BJ (cell line): ENCODE measurements at regions of chr11 and their contacts with region 1.

Region 1: DNA sequence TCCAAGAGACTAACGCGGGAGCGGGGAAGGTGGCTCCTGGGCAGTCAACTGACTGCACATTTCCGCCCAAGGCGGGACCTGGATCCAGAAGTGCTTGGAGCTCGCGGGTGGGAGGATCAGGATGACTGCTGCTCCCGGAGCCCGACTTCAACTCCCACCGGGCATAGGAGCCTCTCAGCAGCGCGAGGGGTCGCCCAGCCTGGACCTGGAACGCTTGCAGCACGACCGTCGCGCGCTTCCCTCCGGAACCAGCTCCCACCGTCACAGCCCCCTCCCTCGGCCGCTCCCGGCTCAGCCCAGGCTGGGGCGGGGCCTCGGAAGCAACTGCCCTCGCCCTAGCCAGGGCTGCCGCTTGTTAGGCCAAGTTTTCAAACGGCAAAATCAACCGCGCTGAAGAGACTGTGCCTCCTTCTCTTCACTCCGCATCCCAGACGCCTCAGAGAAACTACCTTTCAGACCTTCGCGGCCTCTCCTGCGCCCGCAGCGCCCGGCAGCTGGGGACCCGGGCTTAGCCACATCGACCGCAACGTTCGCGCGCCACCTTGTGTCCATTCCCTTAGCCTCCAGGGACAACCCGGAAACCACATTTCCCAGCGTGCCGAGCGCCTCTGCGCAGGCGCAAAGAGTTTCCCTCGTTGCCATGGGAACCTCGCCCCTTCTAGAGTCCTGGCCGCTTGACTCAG is 14.0 kb downstream of the SSH3 start:
- DNase-seq: peak; percentile 55
- H3K4me3 ChIP-seq: peak overlapping the region; percentile 83
- H3K27me3 ChIP-seq: no peaks in the 10 kb centered on the region
- CTCF ChIP-seq: peak; percentile 93

Region 2: GRCh38 chr11:67082035-67082791 is 235.1 kb before region 1 on chr11:
- CTCF ChIA-PET with region 1: interaction called, 21 read pairs
- POLR2A ChIA-PET with region 1: no interaction called
- DNase-seq: no peak
- H3K4me3 ChIP-seq: no peak overlapping the region
- H3K27me3 ChIP-seq: no peaks in the 10 kb centered on the region
- CTCF ChIP-seq: no peak

Region 3: DNA sequence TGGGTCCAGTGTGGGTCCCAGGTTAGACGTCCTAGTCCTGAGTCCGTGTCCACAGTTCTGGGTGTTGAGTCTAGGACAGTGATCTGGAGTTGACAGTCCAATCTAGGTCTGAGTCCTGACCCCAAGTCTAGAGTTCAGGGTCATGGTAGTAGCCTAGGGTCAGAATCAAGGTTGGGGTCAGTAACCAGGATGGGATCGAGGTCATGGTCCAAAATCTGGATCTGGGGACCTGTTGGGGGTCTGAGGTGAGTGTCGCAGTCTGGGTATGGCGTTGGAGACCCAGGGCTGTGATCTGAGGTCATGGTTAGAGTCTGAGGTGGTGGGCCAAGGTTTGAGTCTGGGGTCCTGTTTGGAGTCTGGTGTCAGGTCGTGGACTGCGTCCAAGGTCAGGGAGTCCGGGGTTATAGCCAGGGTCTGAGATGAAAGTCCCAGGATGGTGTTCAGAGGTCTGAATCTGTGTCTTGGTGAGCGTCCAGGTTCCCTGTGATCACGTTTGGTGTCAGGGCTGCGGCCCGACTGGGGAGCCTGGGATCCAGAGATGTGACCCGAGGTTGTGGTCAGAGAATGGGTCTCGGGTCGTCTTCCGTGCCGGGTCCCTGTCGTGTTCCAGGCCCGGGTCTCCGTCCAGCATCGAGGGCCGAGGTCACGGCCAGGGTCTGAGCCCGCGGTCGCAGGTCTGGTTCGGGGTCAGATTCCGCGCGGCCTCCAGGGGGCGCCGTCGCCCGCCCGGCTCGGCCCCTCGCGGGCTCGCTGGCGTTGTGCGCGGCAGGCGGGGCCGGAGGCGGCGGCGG is 51.5 kb before region 1 on chr11:
- CTCF ChIA-PET with region 1: interaction called, 133 read pairs
- POLR2A ChIA-PET with region 1: no interaction called
- DNase-seq: no peak
- H3K4me3 ChIP-seq: peak overlapping the region; percentile 32
- H3K27me3 ChIP-seq: no peaks in the 10 kb centered on the region
- CTCF ChIP-seq: peak; percentile 65

Region 4: GRCh38 chr11:67277231-67277961 is 40.0 kb before region 1 on chr11:
- CTCF ChIA-PET with region 1: interaction called, 13 read pairs
- POLR2A ChIA-PET with region 1: no interaction called
- DNase-seq: no peak
- H3K4me3 ChIP-seq: peak overlapping the region; percentile 34
- H3K27me3 ChIP-seq: no peaks in the 10 kb centered on the region
- CTCF ChIP-seq: no peak

Region 5: DNA sequence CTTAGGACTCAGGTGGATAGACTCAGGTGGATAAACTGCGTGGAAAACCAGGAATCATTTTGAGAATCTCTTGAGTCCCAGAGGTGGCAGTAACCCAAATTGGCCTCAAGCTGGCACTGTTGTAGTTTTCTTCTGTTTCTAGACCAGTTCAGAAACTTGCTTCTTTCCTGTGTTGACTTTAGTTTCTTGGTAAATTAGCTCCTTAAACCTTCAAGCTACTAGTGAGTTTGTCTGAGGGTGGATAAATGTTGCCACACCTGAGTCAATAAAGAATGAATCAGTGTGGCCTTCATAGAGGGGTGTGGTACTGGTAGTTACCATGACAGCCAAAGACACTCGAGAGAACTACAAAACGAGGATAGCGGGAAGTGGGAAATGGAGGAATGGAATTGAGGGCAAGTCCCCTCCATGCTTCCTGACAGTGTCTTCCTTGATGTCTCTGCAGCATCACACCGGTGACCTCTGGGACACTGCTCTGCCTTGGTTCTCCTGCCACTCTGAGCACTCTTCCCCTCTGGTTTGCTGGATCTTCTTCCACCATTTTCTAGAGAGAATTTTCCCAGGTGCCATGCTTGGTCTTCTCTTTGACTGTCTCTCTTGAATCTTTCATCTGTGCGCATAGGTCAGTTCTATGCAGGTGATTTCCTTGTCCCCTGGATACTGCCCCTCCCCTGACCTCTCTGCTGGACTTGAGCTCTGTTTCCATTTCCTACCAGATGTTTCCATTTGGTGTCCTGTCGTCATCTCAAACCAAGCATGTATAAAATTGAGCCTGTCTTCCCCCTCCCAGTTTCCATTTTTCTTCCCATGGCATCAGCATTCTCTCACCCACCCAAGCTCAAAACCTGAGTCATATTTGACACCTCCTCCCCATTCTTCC is 28.8 kb after region 1 on chr11:
- CTCF ChIA-PET with region 1: interaction called, 33 read pairs
- POLR2A ChIA-PET with region 1: no interaction called
- DNase-seq: no peak
- H3K4me3 ChIP-seq: no peak overlapping the region
- H3K27me3 ChIP-seq: no peaks in the 10 kb centered on the region
- CTCF ChIP-seq: peak; percentile 81

Region 6: DNA sequence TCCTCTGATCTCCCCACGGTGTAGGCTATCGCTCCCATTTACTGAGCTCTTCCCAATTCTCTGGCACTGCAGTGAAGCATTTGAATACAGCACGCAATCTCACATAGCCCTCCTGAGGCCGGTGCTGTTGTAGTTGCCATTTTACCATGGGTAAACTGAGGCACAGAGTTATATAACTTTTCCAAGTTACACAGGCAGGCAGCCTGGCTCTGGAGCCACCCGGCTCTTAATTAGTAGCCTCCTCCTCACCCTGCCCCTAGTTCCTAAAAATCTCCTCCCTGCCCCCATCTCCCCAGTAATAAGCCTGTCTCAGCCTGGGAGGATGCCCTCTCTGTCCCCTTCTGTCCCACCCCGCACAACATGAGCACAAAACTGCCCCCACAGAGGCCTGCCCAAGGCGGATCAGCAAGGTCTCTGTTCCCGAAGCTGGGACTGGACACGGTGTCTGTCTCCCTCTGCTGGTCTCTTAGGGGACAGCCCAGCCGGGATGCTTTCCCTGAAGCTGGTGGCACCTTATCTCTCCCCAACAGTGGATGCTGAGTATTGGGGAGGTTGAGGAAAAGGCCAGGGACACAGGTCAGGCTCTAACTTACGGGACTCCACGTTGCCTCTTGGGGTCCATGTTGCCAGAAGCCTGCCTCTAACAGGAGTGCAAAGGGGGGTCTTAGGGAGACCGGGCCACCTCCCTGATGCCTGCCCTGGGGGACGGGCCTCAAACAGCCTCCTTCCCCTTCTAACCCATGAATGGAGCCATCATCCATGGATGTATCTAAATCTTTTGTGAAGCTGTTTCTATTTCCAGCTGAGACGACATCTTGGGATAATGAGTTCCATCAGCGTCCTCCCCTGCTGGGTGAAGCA is 65.2 kb after region 1 on chr11:
- CTCF ChIA-PET with region 1: interaction called, 36 read pairs
- POLR2A ChIA-PET with region 1: no interaction called
- DNase-seq: no peak
- H3K4me3 ChIP-seq: no peak overlapping the region
- H3K27me3 ChIP-seq: no peaks in the 10 kb centered on the region; the same call in 1 of the 2 replicates
- CTCF ChIP-seq: peak; percentile 99